ENCODE measurements at regions of chr4 and their contacts with region 1.

Region 1: DNA sequence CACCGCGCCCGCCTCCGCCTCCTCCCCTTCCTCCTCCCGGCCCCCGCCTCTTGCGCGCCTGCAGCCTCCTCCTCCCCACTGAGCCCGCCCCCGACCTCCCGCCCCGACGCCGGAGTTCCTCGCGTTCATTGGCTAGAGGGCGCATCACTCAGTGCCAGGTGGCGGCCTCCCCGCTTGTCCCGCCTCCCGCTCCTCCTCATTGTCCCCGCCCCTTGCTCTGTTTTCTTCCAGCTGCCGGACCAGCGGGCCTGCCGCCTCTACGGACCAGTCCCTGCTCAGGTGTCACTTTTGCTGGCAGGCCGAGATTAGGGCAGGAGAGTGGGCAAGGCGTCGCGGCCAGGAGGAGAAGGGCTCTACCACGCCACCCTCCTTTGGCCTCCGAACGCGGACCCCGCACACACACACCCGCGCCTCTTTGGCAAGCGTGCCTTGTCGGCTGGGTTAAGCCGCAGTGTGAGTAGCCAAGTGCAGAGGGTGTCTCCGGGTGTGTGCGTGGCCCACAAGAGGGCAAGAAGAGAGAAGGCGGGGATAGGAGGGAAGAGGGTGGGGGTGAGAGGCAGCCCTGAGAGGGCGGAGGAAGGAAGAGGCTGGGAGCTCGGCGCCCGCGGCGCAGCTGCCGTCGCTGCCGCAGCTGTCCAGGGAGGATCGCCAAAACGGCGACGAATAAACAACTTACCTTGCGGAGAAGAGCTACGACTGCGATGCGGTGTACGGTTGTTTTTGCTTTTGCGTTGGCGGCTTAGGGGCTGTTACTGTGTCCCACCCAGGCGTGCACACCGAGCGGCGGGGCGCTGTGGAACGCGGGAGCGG is 436 bp upstream of the PPP3CA start:
- DNase-seq: peak; percentile 95
- ATAC-seq: peak; percentile 90
- H3K4me3 ChIP-seq: peak overlapping the region; percentile 94
- H3K27ac ChIP-seq: peak overlapping the region; percentile 95
- H3K4me1 ChIP-seq: peaks cover 8% of the 10 kb centered on the region
- H3K27me3 ChIP-seq: no peaks in the 10 kb centered on the region
- CTCF ChIP-seq: 0 out of 2 replicates have a peak, but pooled peaks have one; percentile 3
- POLR2A ChIP-seq: peak; percentile 43; the same call in 1 of the 2 replicates
- RAD21 ChIP-seq: no peak

Region 2: DNA sequence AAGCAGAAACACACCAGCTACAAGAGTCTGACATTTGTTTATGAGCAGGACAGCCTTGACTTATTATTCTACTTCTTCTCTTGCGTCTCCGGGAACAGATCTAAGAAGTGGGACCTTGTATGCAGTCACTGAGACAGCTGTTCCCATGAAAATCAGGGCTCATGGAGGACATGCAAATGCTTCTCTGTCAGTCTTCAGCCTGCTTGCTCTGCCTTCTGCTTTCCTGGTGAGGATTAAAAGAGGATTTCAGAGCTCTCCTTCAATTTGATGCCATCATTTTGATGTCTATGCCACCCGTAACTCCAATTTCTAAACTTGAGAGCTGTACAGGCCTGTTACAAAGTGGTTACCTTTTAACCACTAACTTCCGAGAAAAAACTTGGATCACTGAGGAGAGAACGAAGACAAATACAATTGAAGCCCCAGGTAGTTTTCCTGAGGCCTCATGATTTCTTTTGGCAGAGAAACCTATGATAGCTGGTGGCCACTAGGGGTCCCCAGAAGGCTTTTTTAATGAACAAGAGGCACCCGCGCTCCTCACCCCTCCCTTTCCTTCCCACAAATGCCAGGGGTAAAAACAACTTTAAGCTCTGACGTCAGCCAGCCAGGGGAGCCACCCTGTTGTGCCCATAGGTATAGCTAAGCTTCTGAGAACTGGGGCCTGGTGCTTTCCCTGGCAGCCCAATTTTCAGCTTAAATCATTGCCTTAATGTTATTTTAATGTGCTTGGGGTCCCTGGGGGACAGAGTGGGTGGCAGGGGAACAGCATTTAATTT is 1254.5 kb before region 1 on chr4:
- CTCF ChIA-PET with region 1: no interaction called
- POLR2A ChIA-PET with region 1: no interaction called
- dilution Hi-C with region 1: no loop called
- in situ Hi-C with region 1: no loop called
- intact Hi-C with region 1: loop called (anchors 1 kb)
- DNase-seq: peak; percentile 82
- ATAC-seq: peak; percentile 87
- H3K4me3 ChIP-seq: no peak overlapping the region
- H3K27ac ChIP-seq: no peak overlapping the region
- H3K4me1 ChIP-seq: peaks cover 3% of the 10 kb centered on the region
- H3K27me3 ChIP-seq: no peaks in the 10 kb centered on the region
- CTCF ChIP-seq: peak; percentile 78
- POLR2A ChIP-seq: no peak
- RAD21 ChIP-seq: peak; percentile 76

Region 3: DNA sequence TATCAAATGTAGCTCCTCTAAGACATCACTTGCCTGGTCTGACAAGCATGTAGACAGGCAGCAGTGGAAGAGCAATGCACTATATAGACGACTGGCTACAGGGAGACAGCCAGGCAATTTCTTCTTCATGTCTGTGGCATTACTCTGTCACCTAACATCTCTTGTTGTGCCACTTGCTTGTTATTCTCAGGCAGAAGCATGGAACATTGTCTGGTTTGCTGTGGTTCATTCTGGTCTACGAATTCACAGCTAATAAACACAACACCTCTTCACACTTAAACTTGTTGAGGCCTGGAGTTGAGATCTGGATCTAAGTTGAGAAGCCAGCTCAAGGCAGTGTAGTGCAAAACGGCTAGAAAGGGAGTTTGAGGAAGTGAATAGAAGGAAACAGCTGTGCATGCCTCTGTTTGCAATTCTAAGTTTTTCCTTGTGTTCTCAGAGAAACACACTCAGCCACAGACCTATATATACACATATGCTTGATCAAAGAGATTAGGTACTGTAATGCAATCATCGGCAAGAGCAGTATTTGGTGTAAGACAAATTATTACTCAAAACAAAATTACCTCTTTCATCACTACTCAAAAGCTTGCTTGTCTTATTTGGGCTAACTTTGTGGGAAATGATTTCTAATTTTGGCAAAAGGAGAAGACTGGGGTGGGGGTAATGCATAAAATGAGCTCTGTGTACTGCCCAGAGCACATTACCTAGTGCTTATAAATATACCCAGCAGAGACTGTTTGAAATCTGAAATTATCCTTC is 244.2 kb before region 1 on chr4:
- CTCF ChIA-PET with region 1: no interaction called
- POLR2A ChIA-PET with region 1: no interaction called
- dilution Hi-C with region 1: no loop called
- in situ Hi-C with region 1: no loop called
- intact Hi-C with region 1: no loop called
- DNase-seq: peak; percentile 48
- ATAC-seq: peak; percentile 61
- H3K4me3 ChIP-seq: no peak overlapping the region
- H3K27ac ChIP-seq: no peak overlapping the region
- H3K4me1 ChIP-seq: peaks cover 3% of the 10 kb centered on the region
- H3K27me3 ChIP-seq: no peaks in the 10 kb centered on the region
- CTCF ChIP-seq: no peak
- POLR2A ChIP-seq: no peak
- RAD21 ChIP-seq: no peak

Region 4: GRCh38 chr4:101169044-101170014 is 178.4 kb before region 1 on chr4:
- CTCF ChIA-PET with region 1: no interaction called
- POLR2A ChIA-PET with region 1: no interaction called
- dilution Hi-C with region 1: no loop called
- in situ Hi-C with region 1: no loop called
- intact Hi-C with region 1: loop called (anchors 2 kb)
- DNase-seq: peak; percentile 65
- ATAC-seq: peak; percentile 84
- H3K4me3 ChIP-seq: no peak overlapping the region
- H3K27ac ChIP-seq: no peak overlapping the region
- H3K4me1 ChIP-seq: no peaks in the 10 kb centered on the region; the same call in none of the 2 replicates
- H3K27me3 ChIP-seq: no peaks in the 10 kb centered on the region
- CTCF ChIP-seq: peak; percentile 70
- POLR2A ChIP-seq: 0 out of 2 replicates have a peak, but pooled peaks have one; percentile 32
- RAD21 ChIP-seq: peak; percentile 91

Region 5: DNA sequence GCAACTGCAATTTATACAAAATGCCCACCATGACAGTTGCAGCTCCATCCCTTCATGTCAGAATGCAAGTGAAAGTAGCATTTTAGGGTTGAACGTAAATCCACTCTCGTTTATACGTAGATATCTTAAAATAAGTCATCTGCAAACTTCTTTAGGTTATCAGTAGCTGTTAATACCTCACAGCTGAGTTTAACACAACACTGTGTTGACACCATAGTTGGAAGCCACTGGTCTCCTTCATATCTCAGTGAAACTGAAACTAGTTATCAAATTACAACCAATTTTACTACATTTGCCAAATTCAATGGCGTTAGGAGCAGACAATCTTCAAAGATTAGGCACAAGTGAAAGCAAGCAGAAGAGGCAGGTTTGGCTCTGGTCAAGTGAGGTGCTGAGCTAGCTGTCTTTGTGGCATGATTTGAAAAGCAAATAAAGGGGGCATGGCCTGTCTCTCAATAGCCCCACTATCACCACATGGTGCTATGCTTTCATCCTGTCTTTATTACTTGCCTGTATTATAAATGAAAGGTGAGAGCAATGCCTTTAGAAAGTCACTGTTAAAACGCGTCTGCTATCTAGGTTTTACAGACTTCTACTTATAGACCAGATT is 12.7 kb before region 1 on chr4:
- CTCF ChIA-PET with region 1: interaction called, 3 read pairs
- POLR2A ChIA-PET with region 1: interaction called, 14 read pairs
- dilution Hi-C with region 1: no loop called
- in situ Hi-C with region 1: no loop called
- intact Hi-C with region 1: no loop called
- DNase-seq: peak; percentile 21
- ATAC-seq: no peak
- H3K4me3 ChIP-seq: no peak overlapping the region
- H3K27ac ChIP-seq: no peak overlapping the region
- H3K4me1 ChIP-seq: peaks cover 5% of the 10 kb centered on the region
- H3K27me3 ChIP-seq: no peaks in the 10 kb centered on the region
- CTCF ChIP-seq: no peak
- POLR2A ChIP-seq: no peak
- RAD21 ChIP-seq: no peak

Region 6: GRCh38 chr4:101458914-101459313 is 111.2 kb after region 1 on chr4:
- CTCF ChIA-PET with region 1: no interaction called
- POLR2A ChIA-PET with region 1: no interaction called
- dilution Hi-C with region 1: no loop called
- in situ Hi-C with region 1: no loop called
- intact Hi-C with region 1: no loop called
- DNase-seq: peak; percentile 2
- ATAC-seq: peak; percentile 59
- H3K4me3 ChIP-seq: no peak overlapping the region
- H3K27ac ChIP-seq: no peak overlapping the region
- H3K4me1 ChIP-seq: no peaks in the 10 kb centered on the region
- H3K27me3 ChIP-seq: no peaks in the 10 kb centered on the region
- CTCF ChIP-seq: no peak
- POLR2A ChIP-seq: no peak
- RAD21 ChIP-seq: no peak

Region 7: DNA sequence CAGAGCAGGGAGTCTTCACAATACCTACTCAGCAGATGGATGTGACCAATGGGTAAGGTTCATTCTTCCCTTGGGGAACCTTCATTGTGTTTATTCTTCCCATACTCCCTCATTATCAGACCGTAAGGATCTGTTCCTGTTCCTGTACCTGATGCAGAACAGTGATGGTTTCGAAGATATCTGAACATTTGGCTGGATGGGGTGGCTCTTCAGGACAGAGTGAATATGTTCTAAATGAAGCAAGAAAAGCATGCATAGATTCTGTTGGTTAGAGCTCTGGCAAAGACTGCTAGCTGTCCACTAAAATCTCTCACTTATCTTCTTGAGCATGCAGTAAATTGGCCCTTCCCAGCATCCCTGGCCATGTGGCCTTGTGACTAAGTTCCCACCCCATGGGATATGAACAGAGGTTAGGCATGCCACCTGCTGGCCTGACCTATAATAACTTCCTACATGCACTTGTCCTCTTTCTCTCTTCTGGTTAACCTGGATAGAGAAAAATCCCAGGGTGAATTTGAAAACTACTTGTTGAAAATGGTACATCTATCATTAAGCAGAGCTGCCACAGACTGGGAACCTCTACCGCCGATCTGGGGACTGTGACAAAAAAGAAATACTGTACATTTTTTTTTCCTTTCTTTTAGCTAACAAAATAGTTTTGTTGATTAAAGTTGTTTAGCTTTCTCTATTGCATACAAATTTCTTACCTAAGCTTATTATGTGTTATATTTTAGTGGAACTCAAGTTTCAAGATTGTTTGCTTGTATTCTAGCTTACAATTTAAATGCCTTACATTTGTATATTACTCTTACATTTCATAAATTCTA is 382.7 kb after region 1 on chr4:
- CTCF ChIA-PET with region 1: no interaction called
- POLR2A ChIA-PET with region 1: no interaction called
- dilution Hi-C with region 1: no loop called
- in situ Hi-C with region 1: no loop called
- intact Hi-C with region 1: loop called (anchors 1 kb)
- DNase-seq: peak; percentile 70
- ATAC-seq: peak; percentile 94
- H3K4me3 ChIP-seq: no peak overlapping the region
- H3K27ac ChIP-seq: no peak overlapping the region
- H3K4me1 ChIP-seq: no peaks in the 10 kb centered on the region
- H3K27me3 ChIP-seq: no peaks in the 10 kb centered on the region
- CTCF ChIP-seq: peak; percentile 63
- POLR2A ChIP-seq: no peak
- RAD21 ChIP-seq: peak; percentile 82

Measured in IMR-90 (cell line).